ENCODE measurements at regions of chr5 and their contacts with region 1.

Region 1: GRCh38 chr5:176573564-176574296 is 24.6 kb downstream of the CDHR2 start:
- DNase-seq: peak; percentile 62 to 71 (median 67)
- H3K4me3 ChIP-seq: no peak overlapping the region
- H3K4me3 Mint-ChIP-seq: no peak overlapping the region
- H3K27ac ChIP-seq: no peak overlapping the region
- H3K27ac Mint-ChIP-seq: no peak overlapping the region
- H3K4me1 ChIP-seq: peaks cover 6% of the 10 kb centered on the region
- H3K4me1 Mint-ChIP-seq: peaks cover 4 to 16% (median 8%) of the 10 kb centered on the region in 4 donors
- H3K27me3 ChIP-seq: no peaks in the 10 kb centered on the region
- H3K27me3 Mint-ChIP-seq: peaks cover 3 to 9% of the 10 kb centered on the region in 2 donors

Region 2: DNA sequence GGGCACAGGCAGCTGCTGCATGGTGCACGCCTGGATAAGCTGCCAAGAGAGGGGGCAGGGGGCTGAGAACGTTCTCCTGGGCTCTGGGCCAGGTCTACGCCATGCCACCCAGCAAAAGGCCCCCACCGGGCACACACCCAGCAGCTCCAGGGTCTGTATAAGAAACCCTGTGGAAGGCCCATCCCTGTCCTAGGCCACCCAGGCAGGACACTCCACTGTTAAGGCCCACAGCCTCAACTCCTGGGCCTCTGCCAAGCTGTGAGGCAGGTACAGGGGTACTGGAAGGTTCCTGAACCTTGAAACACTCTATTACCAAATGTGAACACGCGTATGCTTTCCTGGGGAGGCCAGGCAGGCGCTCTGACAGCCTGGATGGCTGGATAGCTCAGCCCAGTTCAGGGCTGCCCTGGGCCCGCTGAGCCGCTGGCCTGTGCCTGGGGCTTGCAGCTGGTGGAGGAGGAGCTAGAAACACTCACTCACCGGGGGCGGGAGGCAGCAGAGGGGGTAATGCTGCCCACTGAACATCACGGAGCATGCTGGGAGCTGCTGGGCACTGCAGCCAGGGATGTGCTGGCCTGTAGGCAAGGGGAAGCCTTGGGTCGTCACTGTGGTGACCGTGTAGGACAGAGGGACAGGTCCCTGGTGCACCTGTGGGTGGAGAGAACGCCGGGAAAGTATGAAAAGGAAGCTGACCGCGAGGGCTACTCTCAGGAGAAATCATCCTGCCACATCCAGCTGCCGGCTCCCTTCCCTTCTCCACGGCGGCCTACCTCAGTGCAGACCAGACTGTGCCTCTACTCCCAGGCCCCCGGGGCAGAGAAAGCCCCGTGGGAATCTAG is 42.5 kb before region 1 on chr5:
- CTCF ChIA-PET with region 1: interaction called, 15 read pairs
- POLR2A ChIA-PET with region 1: interaction called, 23 read pairs
- intact Hi-C with region 1: loop called (anchors 2 kb)
- DNase-seq: peak in 2 of 5 donors; percentile 15 to 41
- H3K4me3 ChIP-seq: peak overlapping the region; percentile 15 to 20
- H3K4me3 Mint-ChIP-seq: peak overlapping the region; percentile 71 to 92 (median 80)
- H3K27ac ChIP-seq: peak overlapping the region; percentile 40
- H3K27ac Mint-ChIP-seq: peak overlapping the region; percentile 61 to 93 (median 86)
- H3K4me1 ChIP-seq: peaks cover 75% of the 10 kb centered on the region
- H3K4me1 Mint-ChIP-seq: peaks cover 26 to 62% (median 43%) of the 10 kb centered on the region in 4 donors
- H3K27me3 ChIP-seq: no peaks in the 10 kb centered on the region
- H3K27me3 Mint-ChIP-seq: no peaks in the 10 kb centered on the region

Region 3: DNA sequence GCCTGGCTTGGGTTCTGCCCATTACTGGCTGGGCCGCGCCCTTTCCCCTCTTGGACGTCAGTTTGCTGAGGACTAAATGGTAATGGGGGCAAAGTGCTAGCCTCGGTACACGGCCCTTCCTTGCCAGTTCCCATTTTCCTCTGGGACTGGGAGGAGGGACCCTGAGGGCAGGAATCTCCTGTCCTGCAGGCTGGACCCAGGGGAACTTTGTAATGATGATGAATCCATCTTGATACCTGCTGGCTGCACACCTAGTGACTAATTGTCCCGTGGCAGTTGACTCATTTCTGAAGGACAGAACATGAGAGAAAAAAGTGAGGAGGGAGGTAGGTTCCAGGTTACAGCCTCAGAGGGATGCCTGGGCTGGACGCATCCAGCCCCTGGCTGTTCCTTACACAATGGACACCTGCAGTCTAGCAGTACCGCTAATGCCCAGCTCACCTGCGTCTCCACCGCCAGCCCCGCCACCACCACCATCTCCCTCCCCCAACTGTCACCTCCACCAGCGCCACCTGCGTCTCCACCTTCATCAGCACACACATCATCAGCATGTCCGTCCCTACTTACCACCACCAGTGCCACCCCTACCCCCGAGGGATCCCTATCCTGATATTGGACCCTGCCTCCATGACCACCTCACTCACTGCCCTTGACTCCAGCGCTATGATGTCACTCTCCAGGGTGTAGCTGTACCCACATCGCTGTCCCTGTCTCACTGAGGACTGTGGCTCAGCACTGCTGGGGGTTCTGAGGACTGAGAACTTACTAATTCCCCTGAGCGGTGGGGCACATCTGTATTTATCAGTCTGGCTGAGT is 20.3 kb before region 1 on chr5:
- CTCF ChIA-PET with region 1: interaction called, 14 read pairs
- POLR2A ChIA-PET with region 1: no interaction called
- intact Hi-C with region 1: no loop called
- DNase-seq: no peak
- H3K4me3 ChIP-seq: no peak overlapping the region
- H3K4me3 Mint-ChIP-seq: peak overlapping the region in 1 of 8 donors; percentile 39
- H3K27ac ChIP-seq: no peak overlapping the region
- H3K27ac Mint-ChIP-seq: peak overlapping the region in 6 of 7 donors; percentile 2 to 66 (median 27)
- H3K4me1 ChIP-seq: peaks cover 38% of the 10 kb centered on the region
- H3K4me1 Mint-ChIP-seq: peaks cover 17 to 69% (median 48%) of the 10 kb centered on the region in 4 donors
- H3K27me3 ChIP-seq: no peaks in the 10 kb centered on the region
- H3K27me3 Mint-ChIP-seq: no peaks in the 10 kb centered on the region

Region 4: DNA sequence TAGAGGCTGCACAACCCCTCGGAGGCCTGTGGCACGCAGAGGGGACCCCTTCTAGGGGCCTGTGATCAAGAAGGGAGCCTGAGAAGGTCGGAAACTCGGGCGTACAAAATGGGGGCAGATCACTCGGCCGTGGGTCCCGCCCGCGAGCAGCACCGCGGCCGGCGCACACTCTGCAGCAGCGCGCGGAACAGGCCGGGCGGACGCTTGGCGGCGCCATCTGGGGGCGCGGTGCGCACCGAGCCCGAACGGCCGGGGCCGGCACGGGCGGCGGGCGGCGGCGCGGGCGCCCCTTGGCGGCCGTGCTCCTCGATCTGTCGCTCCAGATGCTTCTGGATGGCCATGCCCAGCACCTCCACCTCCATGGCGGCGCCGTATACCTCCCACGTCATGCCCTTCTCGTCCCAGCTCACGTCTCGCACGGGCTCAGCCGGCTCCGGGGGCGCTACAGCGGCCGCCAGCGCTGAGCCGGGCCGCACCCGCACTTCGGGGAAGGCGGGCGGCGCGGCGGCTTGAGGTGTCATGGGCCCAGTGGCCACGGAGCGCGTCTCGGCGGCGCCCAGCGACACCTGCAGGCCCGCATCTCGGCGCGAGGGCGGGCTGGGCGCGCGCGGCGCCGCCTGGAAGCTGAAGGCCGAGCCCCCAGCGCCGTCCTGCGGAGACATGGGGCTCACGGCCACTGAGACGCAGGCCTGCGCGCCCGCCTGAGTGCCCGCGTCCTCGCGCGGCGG is 23.1 kb after region 1 on chr5:
- CTCF ChIA-PET with region 1: interaction called, 5 read pairs
- POLR2A ChIA-PET with region 1: no interaction called
- intact Hi-C with region 1: loop called (anchors 1 kb)
- DNase-seq: peak; percentile 66 to 75 (median 73)
- H3K4me3 ChIP-seq: peak overlapping the region in 1 of 2 donors; percentile 37
- H3K4me3 Mint-ChIP-seq: peak overlapping the region; percentile 78 to 89 (median 82)
- H3K27ac ChIP-seq: no peak overlapping the region
- H3K27ac Mint-ChIP-seq: peak overlapping the region in 2 of 7 donors; percentile 75 to 77
- H3K4me1 ChIP-seq: peaks cover 6% of the 10 kb centered on the region
- H3K4me1 Mint-ChIP-seq: peaks cover 0 to 9% (median 6%) of the 10 kb centered on the region in 4 donors
- H3K27me3 ChIP-seq: no peaks in the 10 kb centered on the region
- H3K27me3 Mint-ChIP-seq: no peaks in the 10 kb centered on the region

Region 5: DNA sequence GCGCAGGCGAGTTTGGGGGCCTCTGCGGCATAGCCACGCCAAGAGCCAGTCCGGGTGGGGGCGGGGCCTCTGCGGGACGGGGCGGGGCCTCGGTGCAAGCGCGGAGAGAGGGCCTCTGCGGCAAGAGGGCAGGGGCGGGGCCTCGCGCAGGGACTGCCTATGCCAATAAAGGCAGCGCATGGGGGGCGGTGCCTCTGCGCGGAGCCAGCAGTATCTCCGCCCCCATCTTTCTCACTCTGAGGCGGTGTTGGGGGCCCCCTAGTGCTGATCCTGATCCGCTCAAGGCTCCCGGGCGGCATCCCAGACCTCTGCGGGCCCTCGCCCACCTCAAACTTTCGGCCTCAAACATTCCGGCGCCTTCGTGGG is 45.5 kb after region 1 on chr5:
- CTCF ChIA-PET with region 1: no interaction called
- POLR2A ChIA-PET with region 1: no interaction called
- intact Hi-C with region 1: no loop called
- DNase-seq: peak; percentile 63 to 77 (median 70)
- H3K4me3 ChIP-seq: no peak overlapping the region
- H3K4me3 Mint-ChIP-seq: peak overlapping the region in 7 of 8 donors; percentile 32 to 75 (median 56)
- H3K27ac ChIP-seq: no peak overlapping the region
- H3K27ac Mint-ChIP-seq: no peak overlapping the region
- H3K4me1 ChIP-seq: peaks cover 23% of the 10 kb centered on the region
- H3K4me1 Mint-ChIP-seq: peaks cover 6 to 19% (median 13%) of the 10 kb centered on the region in 4 donors
- H3K27me3 ChIP-seq: peaks cover 35% of the 10 kb centered on the region
- H3K27me3 Mint-ChIP-seq: peaks cover 33 to 51% of the 10 kb centered on the region in 2 donors